GM12878 (cell line): ENCODE measurements at regions of chr1 and their contacts with region 1.

Region 1: DNA sequence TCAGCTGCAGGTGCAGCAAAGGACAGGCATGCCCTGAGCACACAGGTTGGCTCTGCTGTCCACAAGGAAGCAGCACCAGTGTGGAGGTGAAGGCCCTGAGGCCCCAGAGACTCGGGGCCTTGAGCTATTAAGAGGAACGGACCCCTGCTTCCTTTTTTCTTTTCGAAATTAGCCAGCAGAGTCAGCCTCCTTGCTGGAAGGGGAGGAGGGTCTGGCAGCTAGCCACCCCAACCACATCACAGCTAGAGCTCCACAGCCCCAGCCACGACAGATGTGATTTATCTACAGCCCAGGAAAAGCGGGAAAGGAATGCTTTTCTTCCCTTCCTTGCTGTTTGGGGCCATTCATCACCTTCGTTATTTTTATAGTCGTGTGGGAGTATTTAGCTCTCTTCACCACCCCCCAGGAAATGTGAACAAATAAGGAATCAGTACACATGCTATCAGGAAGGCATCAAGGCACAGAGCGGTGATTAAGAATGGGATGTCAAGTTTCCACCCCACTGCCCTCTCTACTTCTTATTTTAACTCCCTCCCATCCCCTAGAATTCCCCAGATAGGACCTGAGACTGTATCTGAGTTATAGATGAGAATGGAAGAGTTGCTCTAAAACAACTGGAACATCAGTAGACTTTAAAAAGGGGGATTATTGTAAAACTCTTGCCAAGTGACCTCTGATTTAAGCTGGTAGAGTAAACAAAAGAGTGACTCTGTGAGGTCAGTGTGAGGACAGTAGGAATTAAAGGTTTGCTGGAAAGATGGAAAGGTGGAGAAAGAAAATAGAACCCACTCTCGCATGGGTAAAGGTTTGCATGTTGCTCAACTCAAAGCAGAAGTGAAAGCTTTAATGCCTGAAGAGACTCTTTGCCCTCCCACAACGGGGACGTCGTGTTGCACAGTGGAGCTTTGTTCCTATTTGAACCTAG is 224.7 kb upstream of the GJB5 start:
- DNase-seq: peak; percentile 73
- ATAC-seq: peak; percentile 89
- H3K4me3 ChIP-seq: peak overlapping the region; percentile 30; the same call in 1 of the 2 replicates
- H3K27ac ChIP-seq: peak overlapping the region; percentile 93
- H3K4me1 ChIP-seq: peaks cover 41% of the 10 kb centered on the region
- H3K27me3 ChIP-seq: no peaks in the 10 kb centered on the region
- CTCF ChIP-seq: no peak
- EP300 ChIP-seq: peak; percentile 13 to 57; a peak in 1 of 4 replicates
- POLR2A ChIP-seq: no peak
- RAD21 ChIP-seq: no peak

Region 2: DNA sequence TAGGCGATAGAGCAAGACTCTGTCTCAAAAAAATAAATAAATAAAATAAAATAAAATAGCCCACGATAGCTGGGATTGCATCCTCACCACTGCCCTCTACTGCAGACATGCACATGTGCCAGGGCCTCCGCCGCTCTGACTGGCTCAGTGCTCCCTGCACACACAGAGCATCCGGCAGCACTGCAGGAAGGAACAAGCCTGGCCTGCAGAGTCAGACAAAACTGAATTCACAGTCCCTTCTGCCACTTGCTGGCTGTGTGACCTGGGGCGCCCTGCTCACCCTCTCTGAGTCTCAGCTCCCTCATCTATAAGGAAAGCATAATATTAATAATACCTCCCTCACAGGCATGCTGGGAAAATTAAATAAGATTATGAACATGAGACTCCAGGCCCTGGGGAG is 400.6 kb before region 1 on chr1:
- CTCF ChIA-PET with region 1: no interaction called
- POLR2A ChIA-PET with region 1: no interaction called
- RAD21 ChIA-PET with region 1: no interaction called
- SMC1A ChIA-PET with region 1: no interaction called
- in situ Hi-C with region 1: no loop called
- intact Hi-C with region 1: loop called (anchors 5 kb)
- DNase-seq: no peak
- ATAC-seq: no peak
- H3K4me3 ChIP-seq: no peak overlapping the region
- H3K27ac ChIP-seq: no peak overlapping the region
- H3K4me1 ChIP-seq: no peaks in the 10 kb centered on the region
- H3K27me3 ChIP-seq: no peaks in the 10 kb centered on the region
- CTCF ChIP-seq: no peak
- EP300 ChIP-seq: no peak
- POLR2A ChIP-seq: no peak
- RAD21 ChIP-seq: no peak

Region 3: DNA sequence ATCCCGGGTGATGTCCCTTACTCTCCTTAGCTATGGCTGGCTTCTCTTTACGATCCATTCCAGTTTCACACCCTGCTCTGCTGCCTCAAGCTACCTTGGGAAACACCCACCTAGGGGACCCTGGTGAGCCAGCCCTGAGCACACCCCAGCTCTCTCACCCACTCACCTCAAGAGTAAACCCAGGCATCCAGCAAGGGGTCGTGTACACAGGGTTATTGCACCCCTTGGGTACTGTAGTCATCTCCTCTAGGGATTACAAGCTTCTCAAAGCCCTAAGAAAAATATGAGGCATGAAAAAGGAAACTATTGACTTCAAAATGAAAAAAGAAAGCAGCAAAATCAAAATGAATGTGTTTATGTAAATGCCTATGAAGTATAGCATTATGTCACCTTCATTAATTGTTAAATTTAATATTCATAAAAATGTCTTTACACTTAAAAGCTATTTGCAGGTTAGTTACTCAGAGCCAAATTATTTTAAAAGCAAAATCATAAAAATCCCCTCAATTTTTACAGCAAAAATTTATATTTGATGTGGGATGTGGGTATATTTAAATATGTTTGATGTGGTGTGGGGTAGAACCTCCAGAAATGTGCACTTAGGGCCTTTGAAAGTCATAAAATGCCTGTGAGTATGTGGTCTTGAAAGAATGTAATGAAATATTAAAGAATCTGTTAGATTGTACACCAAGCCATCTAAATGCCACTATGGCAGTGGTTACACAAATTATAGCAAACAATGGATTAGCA is 163.1 kb before region 1 on chr1:
- CTCF ChIA-PET with region 1: interaction called, 11 read pairs
- POLR2A ChIA-PET with region 1: no interaction called
- RAD21 ChIA-PET with region 1: interaction called, 11 read pairs
- SMC1A ChIA-PET with region 1: interaction called, 6 read pairs
- in situ Hi-C with region 1: loop called (anchors 10 kb)
- intact Hi-C with region 1: no loop called
- DNase-seq: no peak
- ATAC-seq: peak; percentile 64
- H3K4me3 ChIP-seq: no peak overlapping the region
- H3K27ac ChIP-seq: no peak overlapping the region
- H3K4me1 ChIP-seq: peaks cover 9% of the 10 kb centered on the region; the same call in 1 of the 2 replicates
- H3K27me3 ChIP-seq: no peaks in the 10 kb centered on the region; a peak in 1 of 4 replicates
- CTCF ChIP-seq: no peak
- EP300 ChIP-seq: no peak
- POLR2A ChIP-seq: no peak
- RAD21 ChIP-seq: no peak

Region 4: DNA sequence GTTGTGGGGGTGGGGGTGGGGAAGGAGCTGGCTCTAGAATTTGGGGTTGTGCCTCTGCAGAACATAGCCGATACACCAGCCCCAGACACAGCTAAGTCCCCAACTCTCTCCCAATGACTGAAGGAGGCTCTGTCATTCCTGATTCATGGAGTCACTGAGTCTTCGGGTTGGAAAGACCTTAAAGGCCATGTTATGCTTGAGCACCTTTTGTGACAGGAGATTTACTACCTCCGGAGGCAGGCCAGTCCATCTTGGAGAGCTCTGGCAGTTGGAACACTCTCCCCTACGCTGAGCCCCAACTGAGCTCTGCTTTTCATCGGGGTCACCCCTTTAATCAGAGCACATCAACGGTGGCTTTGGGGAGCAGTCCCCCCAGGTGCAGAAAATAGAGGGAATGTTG is 59.8 kb before region 1 on chr1:
- CTCF ChIA-PET with region 1: interaction called, 5 read pairs
- POLR2A ChIA-PET with region 1: no interaction called
- RAD21 ChIA-PET with region 1: interaction called, 3 read pairs
- SMC1A ChIA-PET with region 1: interaction called, 15 read pairs
- in situ Hi-C with region 1: loop called (anchors 10 kb)
- intact Hi-C with region 1: no loop called
- DNase-seq: no peak
- ATAC-seq: no peak
- H3K4me3 ChIP-seq: no peak overlapping the region
- H3K27ac ChIP-seq: no peak overlapping the region
- H3K4me1 ChIP-seq: no peaks in the 10 kb centered on the region
- H3K27me3 ChIP-seq: peaks cover 0 to 2% of the 10 kb centered on the region in 2 experiments; a peak in 1 of 4 replicates
- CTCF ChIP-seq: no peak
- EP300 ChIP-seq: no peak
- POLR2A ChIP-seq: no peak
- RAD21 ChIP-seq: no peak

Region 5: DNA sequence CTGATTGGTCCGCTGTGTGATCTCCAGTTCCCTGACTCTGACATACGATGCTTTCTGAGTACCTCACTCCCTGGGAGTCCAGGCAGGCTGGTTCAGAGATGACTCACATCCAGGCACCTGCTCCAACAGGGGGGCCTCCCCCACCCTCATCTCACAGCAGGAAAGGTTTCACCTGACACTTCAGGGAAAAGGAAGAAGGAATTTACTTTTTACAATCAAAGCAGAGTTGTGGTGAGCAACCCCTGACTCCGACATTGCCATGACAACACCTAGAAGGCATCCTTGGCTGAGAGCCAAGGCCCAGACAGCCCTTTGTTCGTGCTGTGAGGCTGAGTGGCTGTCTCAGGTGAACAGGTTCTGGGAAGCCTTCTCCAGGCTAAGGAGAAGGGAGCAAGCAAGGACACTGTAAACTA is 60.0 kb after region 1 on chr1:
- CTCF ChIA-PET with region 1: interaction called, 54 read pairs
- POLR2A ChIA-PET with region 1: interaction called, 13 read pairs
- RAD21 ChIA-PET with region 1: interaction called, 87 read pairs
- SMC1A ChIA-PET with region 1: interaction called, 104 read pairs
- in situ Hi-C with region 1: no loop called
- intact Hi-C with region 1: loop called (anchors 5 kb)
- DNase-seq: peak; percentile 16
- ATAC-seq: no peak
- H3K4me3 ChIP-seq: no peak overlapping the region
- H3K27ac ChIP-seq: no peak overlapping the region
- H3K4me1 ChIP-seq: peaks cover 10% of the 10 kb centered on the region; the same call in 1 of the 2 replicates
- H3K27me3 ChIP-seq: no peaks in the 10 kb centered on the region
- CTCF ChIP-seq: no peak
- EP300 ChIP-seq: no peak
- POLR2A ChIP-seq: no peak
- RAD21 ChIP-seq: no peak